ENCODE measurements at regions of chr12 and their contacts with region 1.

Region 1: GRCh38 chr12:119208622-119209061 is 29.9 kb downstream of the HSPB8 start:
- DNase-seq: peak; percentile 55 to 89
- ATAC-seq: peak; percentile 80 to 86
- H3K4me3 ChIP-seq: no peak overlapping the region
- H3K27ac ChIP-seq: peak overlapping the region in 3 of 4 donors; percentile 51 to 71 (median 60)
- H3K4me1 ChIP-seq: peaks cover 22 to 36% of the 10 kb centered on the region in 2 donors
- H3K27me3 ChIP-seq: no peaks in the 10 kb centered on the region
- CTCF ChIP-seq: no peak
- POLR2A ChIP-seq: peak; percentile 23 to 28

Region 2: GRCh38 chr12:119145367-119145766 is 63.3 kb before region 1 on chr12:
- in situ Hi-C with region 1: no loop called
- intact Hi-C with region 1: no loop called
- DNase-seq: no peak
- ATAC-seq: no peak
- H3K4me3 ChIP-seq: no peak overlapping the region
- H3K27ac ChIP-seq: no peak overlapping the region
- H3K4me1 ChIP-seq: peaks cover 8 to 10% of the 10 kb centered on the region in 2 donors
- H3K27me3 ChIP-seq: no peaks in the 10 kb centered on the region
- CTCF ChIP-seq: no peak
- POLR2A ChIP-seq: no peak

Region 3: DNA sequence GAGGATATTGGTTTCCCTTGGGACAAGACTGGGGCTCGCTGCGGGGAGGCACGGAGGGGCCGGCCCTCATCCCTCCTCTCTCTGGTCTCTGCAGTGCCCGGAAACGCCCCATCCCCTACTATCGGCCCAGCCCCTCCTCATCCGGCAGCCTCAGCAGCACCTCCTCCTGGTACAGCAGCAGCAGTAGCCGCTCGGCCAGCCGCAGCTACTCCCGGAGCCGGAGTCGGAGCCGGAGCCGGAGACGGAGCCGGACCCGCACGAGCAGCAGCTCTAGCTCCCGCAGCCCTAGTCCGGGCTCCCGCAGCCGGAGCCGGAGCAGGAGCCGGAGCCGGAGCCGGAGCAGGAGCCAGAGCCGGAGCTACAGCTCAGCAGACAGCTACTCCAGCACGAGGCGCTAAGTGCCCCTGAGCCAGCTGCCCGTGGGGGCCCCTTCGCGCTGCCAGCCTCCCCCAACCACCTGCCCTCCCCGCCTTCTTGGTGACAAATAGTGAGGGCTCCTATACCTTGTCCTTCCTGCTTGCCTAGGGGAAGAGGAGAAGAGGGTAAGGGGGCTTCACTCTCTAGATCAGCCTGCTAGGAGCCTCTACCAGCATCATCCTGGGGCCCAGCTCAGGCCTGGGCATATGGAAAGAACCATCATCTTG is 52.1 kb before region 1 on chr12:
- in situ Hi-C with region 1: no loop called
- intact Hi-C with region 1: loop called (anchors 2 kb)
- DNase-seq: peak in 1 of 2 donors; percentile 30
- ATAC-seq: no peak
- H3K4me3 ChIP-seq: no peak overlapping the region
- H3K27ac ChIP-seq: peak overlapping the region; percentile 93 to 99 (median 95)
- H3K4me1 ChIP-seq: peaks cover 43 to 46% of the 10 kb centered on the region in 2 donors
- H3K27me3 ChIP-seq: no peaks in the 10 kb centered on the region
- CTCF ChIP-seq: peak in 1 of 5 experiments; percentile 23
- POLR2A ChIP-seq: no peak

Region 4: GRCh38 chr12:119249326-119250155 is 40.9 kb after region 1 on chr12:
- in situ Hi-C with region 1: no loop called
- intact Hi-C with region 1: loop called (anchors 2 kb)
- DNase-seq: no peak
- ATAC-seq: no peak
- H3K4me3 ChIP-seq: no peak overlapping the region
- H3K27ac ChIP-seq: peak overlapping the region in 2 of 4 donors; percentile 3 to 26
- H3K4me1 ChIP-seq: peaks cover 23 to 28% of the 10 kb centered on the region in 2 donors
- H3K27me3 ChIP-seq: no peaks in the 10 kb centered on the region
- CTCF ChIP-seq: no peak
- POLR2A ChIP-seq: no peak